Right cardiac atrium (tissue), 5 donors: ENCODE measurements at regions of chr12 and their contacts with region 1.

Region 1: DNA sequence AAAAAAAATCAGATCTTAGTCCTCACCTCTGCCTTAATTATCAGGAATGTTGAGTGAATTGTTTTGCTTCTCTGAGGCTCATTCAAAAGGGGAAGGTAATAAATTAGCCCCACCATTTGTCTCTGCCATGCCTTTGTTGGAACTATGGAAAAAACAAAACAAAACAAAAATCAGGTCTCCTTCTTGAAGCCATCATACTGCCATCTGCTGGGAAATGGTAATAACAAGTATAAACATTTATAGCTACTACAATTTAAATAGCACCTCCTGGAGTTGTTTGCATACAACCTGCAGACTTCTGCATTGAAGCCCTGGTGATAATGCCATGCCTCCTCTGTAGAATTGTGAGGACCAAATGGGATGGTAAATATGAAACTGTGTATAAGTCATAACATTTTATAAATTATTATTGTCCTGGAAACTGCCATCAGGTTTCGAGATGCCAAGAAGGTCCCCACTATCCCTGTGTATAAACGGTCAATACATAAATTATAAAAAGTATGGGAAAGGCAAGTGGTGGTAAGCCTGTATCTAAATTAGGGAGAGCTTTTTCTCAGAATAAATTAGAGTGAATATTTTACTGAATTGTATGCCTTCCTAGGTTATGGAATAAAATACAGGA is 87.2 kb upstream of the FGD4 start:
- DNase-seq: no peak
- ATAC-seq: peak in 1 of 2 donors; percentile 44
- H3K4me3 ChIP-seq: no peak overlapping the region
- H3K27ac ChIP-seq: no peak overlapping the region
- H3K4me1 ChIP-seq: peaks cover 3% of the 10 kb centered on the region
- H3K27me3 ChIP-seq: no peaks in the 10 kb centered on the region

Region 2: DNA sequence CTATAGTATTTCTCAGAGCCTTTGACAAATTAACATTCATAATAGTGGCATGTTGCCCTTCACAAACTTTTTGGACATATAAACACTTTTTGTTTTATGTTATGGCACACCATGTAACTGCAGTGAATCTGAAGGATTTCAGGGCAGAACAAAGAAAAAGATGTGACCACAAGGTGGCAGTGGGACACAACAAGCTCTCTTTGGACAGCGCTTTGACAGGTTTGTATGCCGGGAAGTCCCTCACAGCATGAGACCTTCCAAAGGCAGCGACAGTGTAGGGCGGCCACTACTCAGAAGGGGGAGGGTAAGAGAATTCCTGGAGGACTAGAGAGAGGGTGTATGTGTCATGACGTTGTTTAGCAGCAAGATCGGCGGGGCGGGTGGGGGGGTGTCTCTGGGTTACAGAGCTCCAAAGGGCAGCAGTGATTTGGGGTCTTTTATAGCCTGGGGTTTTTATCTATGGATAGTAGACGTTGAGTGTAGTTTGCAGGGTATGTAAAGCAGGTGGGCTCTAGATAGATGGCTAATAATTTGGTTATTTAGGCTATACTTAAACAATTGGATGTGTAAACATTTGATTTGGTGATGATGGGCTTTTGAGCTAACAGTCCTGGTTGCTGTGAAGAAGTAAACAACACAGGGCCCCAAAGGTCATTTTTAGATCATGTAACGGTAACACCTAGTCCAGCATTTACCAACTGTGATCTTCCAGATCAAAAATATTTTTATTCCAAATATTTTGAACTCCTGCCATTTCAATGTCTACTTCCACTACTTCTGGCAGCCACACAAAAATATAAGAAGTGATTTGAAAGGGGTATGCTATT is 629.8 kb before region 1 on chr12:
- intact Hi-C with region 1: loop called in 1 of 4 experiments (anchors 10 kb)
- DNase-seq: peak in 1 of 3 donors; percentile 28
- ATAC-seq: peak; percentile 65 to 82
- H3K4me3 ChIP-seq: no peak overlapping the region
- H3K27ac ChIP-seq: no peak overlapping the region
- H3K4me1 ChIP-seq: no peaks in the 10 kb centered on the region
- H3K27me3 ChIP-seq: no peaks in the 10 kb centered on the region

Region 3: GRCh38 chr12:32062881-32063280 is 249.3 kb before region 1 on chr12:
- intact Hi-C with region 1: loop called in 3 of 4 experiments (anchors 2 to 10 kb)
- DNase-seq: no peak
- ATAC-seq: no peak
- H3K4me3 ChIP-seq: no peak overlapping the region
- H3K27ac ChIP-seq: no peak overlapping the region
- H3K4me1 ChIP-seq: no peaks in the 10 kb centered on the region
- H3K27me3 ChIP-seq: no peaks in the 10 kb centered on the region

Region 4: GRCh38 chr12:33052141-33053051 is 740.2 kb after region 1 on chr12:
- intact Hi-C with region 1: no loop called
- DNase-seq: peak in 2 of 3 donors; percentile 29 to 39
- ATAC-seq: peak in 1 of 2 donors; percentile 38
- H3K4me3 ChIP-seq: no peak overlapping the region
- H3K27ac ChIP-seq: no peak overlapping the region
- H3K4me1 ChIP-seq: no peaks in the 10 kb centered on the region
- H3K27me3 ChIP-seq: no peaks in the 10 kb centered on the region